ENCODE measurements at regions of chr22 and their contacts with region 1.

Region 1: DNA sequence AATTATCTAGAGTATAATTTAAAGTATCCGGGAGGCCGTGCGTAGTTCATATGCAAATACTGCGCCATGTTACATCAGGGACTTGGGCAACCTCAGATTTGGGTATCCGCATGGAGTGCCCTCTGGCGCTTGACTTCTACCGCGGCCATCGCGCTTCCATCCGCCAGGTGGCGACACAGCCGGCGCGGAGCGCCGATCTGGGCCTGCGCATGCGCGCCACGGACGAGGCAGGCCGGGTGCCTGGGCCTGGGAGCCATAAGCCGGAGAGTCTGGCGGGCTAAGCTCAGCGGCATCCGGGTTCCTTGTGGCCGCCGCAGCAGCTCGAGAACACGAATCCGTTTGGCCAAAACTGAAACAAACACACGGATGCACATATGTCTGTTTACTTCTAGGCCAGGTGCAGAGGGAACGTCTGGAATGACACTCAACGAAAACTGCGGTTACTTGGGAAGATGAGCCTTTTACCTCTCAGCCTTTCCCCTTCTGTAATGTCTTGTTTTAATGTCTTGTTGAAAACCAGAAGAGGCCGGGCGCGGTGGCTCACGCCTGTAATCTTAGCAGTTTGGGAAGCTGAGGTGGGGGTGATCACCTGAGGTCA is 21.9 kb downstream of the SNU13 start:
- DNase-seq: peak; percentile 96
- ATAC-seq: peak; percentile 97
- H3K4me3 Mint-ChIP-seq: peak overlapping the region; percentile 85
- H3K27ac Mint-ChIP-seq: peak overlapping the region; percentile 97
- H3K4me1 Mint-ChIP-seq: peaks cover 10% of the 10 kb centered on the region
- H3K27me3 Mint-ChIP-seq: no peaks in the 10 kb centered on the region

Region 2: GRCh38 chr22:41621099-41621910 is 45.5 kb before region 1 on chr22 and contains the start of gene XRCC6:
- CTCF ChIA-PET with region 1: interaction called, 24 read pairs
- DNase-seq: peak; percentile 100
- ATAC-seq: peak; percentile 88
- H3K4me3 Mint-ChIP-seq: peak within 1 kb of the TSS; percentile 96
- H3K27ac Mint-ChIP-seq: peak within 1 kb of the TSS; percentile 97
- H3K4me1 Mint-ChIP-seq: peaks cover 47% of the 10 kb centered on the region
- H3K27me3 Mint-ChIP-seq: no peaks in the 10 kb centered on the region
- total RNA-seq, gene XRCC6: 274 to 359 TPM

Region 3: DNA sequence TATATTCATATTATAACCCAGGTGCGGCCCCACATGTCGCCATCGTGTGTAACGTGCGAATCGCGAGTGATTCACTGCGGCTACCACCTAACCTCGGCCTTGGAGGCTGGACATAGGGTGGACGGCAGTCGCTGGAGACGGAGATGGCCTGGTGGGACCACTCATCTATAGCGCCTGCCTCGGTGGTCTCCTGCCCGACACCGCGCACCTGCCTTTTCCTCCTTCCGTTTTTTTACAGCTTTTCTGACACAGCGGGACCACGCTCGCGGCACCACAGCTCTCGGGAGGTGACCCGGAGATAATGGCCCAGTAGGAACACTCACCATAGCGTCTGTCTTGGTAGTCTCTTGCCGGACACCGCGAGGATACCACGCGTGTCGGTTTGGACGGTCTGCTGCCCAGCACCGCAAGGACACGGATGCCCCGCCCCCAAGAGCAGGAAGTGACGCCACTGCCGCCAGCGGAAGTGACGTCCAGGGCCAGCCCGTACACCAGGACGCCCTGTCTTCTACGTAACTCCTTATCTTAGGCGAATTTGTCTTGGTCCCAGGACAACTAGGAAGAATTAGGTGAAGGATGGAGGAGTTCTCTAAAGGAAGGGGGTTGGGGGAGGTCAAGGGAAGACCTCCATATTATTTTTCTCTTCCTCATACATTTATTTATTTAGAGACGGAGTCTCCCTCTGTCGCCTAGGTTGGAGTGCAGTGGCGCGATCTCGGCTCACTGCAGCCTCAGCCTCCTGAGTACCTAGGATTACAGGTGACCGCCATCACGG is 15.5 kb after region 1 on chr22:
- CTCF ChIA-PET with region 1: interaction called, 57 read pairs
- DNase-seq: peak; percentile 91
- ATAC-seq: peak; percentile 91
- H3K4me3 Mint-ChIP-seq: peak overlapping the region; percentile 100
- H3K27ac Mint-ChIP-seq: peak overlapping the region; percentile 97
- H3K4me1 Mint-ChIP-seq: peaks cover 28% of the 10 kb centered on the region
- H3K27me3 Mint-ChIP-seq: no peaks in the 10 kb centered on the region

Region 4: DNA sequence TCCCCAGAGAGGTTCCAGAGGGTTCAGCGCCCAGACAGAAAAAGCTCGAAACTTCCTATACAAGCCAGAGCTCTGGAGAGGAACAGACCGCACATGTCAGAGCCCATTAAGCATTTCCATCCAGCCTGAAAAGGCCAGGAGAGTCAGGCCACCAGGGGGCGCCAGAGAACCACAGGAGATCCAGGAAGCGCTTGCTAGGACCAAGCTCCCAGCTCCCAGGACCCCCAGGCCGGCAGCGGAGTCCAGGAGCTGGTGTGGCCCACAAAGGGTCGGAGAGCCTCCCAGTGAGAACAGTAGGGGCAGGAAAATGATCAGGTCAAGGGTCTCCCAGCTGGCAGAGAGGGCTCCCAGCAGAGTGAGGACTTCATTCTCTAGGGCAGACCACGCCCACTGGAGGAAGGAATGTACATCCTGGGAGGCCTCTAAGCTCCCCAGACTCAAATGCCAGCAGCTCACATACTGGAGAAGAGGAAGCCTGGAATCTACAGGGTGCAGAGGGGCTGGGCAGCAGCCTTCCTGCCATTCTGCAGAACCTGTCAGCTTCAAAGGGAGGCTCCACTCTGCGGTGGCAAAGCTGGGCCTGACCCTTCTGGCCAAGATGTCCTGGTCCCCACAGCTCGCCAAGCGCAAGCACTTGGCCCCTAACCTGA is 30.5 kb after region 1 on chr22:
- CTCF ChIA-PET with region 1: interaction called, 36 read pairs
- DNase-seq: peak; percentile 92
- ATAC-seq: peak; percentile 82
- H3K4me3 Mint-ChIP-seq: no peak overlapping the region
- H3K27ac Mint-ChIP-seq: peak overlapping the region; percentile 79
- H3K4me1 Mint-ChIP-seq: peaks cover 9% of the 10 kb centered on the region
- H3K27me3 Mint-ChIP-seq: peaks cover 5% of the 10 kb centered on the region

Region 5: GRCh38 chr22:41739576-41739975 is 72.8 kb after region 1 on chr22:
- CTCF ChIA-PET with region 1: no interaction called
- DNase-seq: peak; percentile 47
- ATAC-seq: peak; percentile 70
- H3K4me3 Mint-ChIP-seq: no peak overlapping the region
- H3K27ac Mint-ChIP-seq: no peak overlapping the region
- H3K4me1 Mint-ChIP-seq: peaks cover 7% of the 10 kb centered on the region
- H3K27me3 Mint-ChIP-seq: peaks cover 3% of the 10 kb centered on the region

Region 6: DNA sequence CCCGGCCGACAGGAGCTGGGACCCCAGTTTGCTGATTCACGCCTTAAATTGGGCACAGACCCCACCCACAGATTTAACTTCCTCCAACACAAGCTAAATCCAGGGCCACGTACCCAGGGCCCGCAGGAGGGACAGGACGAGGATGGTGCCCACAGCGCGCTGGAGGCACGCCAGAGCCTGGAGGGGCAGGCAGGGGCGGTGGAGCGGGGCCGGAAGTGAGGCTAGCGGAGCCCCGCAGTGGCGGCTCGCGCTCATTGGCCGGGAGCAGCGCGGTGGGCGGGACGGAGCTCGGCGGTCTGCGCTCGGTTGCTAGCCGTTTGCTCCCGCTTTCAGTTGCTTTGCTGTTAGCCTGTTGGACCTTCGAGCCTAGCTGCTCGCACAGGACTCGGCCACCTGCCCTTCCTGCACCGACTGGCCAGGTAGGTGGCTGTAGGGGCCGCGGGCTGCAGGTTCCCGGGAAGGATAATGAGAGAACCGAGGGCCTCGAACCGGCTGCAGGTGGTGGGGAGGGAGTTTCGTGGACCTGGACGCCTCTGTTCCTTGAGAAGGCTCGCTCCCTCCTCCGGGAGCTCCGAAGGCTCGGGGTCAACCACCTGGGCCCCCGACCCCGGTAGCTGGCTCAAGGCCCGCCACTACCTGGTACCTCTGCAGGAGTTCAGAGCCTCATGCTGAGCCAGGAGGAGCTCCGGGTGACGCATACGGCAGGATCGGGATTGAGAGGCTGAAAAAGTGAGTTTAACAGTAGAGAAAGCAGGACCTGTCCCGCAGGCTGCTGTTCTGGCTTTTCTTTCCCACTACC is 133.8 kb after region 1 on chr22 and contains the start of gene CCDC134:
- CTCF ChIA-PET with region 1: interaction called, 15 read pairs
- DNase-seq: peak; percentile 94
- ATAC-seq: peak; percentile 97
- H3K4me3 Mint-ChIP-seq: peak within 1 kb of the TSS; percentile 93
- H3K27ac Mint-ChIP-seq: peak within 1 kb of the TSS; percentile 97
- H3K4me1 Mint-ChIP-seq: peaks cover 45% of the 10 kb centered on the region
- H3K27me3 Mint-ChIP-seq: no peaks in the 10 kb centered on the region
- total RNA-seq, gene CCDC134: 25.3 to 27.9 TPM

Region 7: GRCh38 chr22:41940832-41941765 is 274.3 kb after region 1 on chr22:
- CTCF ChIA-PET with region 1: interaction called, 13 read pairs
- DNase-seq: peak; percentile 93
- ATAC-seq: peak; percentile 62
- H3K4me3 Mint-ChIP-seq: peak overlapping the region; percentile 34
- H3K27ac Mint-ChIP-seq: peak overlapping the region; percentile 98
- H3K4me1 Mint-ChIP-seq: peaks cover 63% of the 10 kb centered on the region
- H3K27me3 Mint-ChIP-seq: no peaks in the 10 kb centered on the region

Region 8: DNA sequence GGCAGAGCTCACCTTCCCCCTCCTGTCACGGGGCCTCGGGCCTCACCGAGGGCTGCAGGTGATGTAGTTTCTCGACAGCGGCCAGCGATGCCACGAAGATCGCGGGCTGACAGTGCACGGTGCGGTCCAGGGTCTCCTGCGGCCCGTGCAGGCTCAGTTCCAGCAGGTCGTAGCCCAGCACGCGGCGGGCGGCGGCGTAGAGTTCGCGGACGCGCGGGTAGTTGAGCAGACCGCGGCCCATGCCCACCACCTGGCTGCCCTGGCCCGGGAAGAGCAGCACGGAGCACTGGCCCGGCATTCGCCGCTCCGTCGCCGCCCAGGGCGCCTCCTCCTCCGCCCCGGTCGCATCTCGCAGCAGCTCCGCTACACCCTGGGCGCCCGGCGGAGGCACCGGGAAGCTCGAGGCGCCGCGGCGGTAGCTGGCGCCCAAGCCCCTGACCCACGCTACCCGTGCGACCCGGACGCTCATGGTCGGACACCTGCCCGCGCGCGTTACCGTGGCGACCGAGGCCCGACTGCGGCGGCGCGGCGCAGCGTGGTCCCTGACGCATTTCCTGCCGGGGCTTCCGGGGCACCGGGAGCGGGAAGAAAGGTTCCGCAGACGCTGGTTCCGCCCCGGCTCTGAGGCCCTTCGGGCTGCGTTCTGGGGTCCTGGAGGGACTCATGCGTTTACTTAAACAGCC is 1476.3 kb after region 1 on chr22 and contains the start of gene MCAT:
- CTCF ChIA-PET with region 1: interaction called, 10 read pairs
- DNase-seq: peak; percentile 88
- ATAC-seq: peak; percentile 90
- H3K4me3 Mint-ChIP-seq: peak within 1 kb of the TSS; percentile 91
- H3K27ac Mint-ChIP-seq: peak within 1 kb of the TSS; percentile 90
- H3K4me1 Mint-ChIP-seq: peaks cover 30% of the 10 kb centered on the region
- H3K27me3 Mint-ChIP-seq: no peaks in the 10 kb centered on the region
- total RNA-seq, gene MCAT: 10.7 to 13.2 TPM

Measured in activated CD8-positive, alpha-beta memory T cell treated with anti-CD3 and anti-CD28 coated beads, Interleukin-2, amount 10 ng/mL, durations not matched to agents 7 days and 5 days (primary cell).